ENCODE measurements at regions of chr17 and their contacts with region 1.

Region 1: GRCh38 chr17:58200017-58200633 is 7.6 kb downstream of the EPX start:
- DNase-seq: peak; percentile 22 to 73 (median 42)
- ATAC-seq: peak; percentile 76
- H3K4me3 ChIP-seq: no peak overlapping the region
- H3K4me3 Mint-ChIP-seq: no peak overlapping the region
- H3K27ac ChIP-seq: no peak overlapping the region
- H3K27ac Mint-ChIP-seq: no peak overlapping the region
- H3K4me1 ChIP-seq: peaks cover 5% of the 10 kb centered on the region
- H3K4me1 Mint-ChIP-seq: peaks cover 4% of the 10 kb centered on the region
- H3K27me3 ChIP-seq: peaks cover 0 to 10% of the 10 kb centered on the region in 2 experiments
- H3K27me3 Mint-ChIP-seq: peaks cover 23% of the 10 kb centered on the region
- CTCF ChIP-seq: peak; percentile 67

Region 2: DNA sequence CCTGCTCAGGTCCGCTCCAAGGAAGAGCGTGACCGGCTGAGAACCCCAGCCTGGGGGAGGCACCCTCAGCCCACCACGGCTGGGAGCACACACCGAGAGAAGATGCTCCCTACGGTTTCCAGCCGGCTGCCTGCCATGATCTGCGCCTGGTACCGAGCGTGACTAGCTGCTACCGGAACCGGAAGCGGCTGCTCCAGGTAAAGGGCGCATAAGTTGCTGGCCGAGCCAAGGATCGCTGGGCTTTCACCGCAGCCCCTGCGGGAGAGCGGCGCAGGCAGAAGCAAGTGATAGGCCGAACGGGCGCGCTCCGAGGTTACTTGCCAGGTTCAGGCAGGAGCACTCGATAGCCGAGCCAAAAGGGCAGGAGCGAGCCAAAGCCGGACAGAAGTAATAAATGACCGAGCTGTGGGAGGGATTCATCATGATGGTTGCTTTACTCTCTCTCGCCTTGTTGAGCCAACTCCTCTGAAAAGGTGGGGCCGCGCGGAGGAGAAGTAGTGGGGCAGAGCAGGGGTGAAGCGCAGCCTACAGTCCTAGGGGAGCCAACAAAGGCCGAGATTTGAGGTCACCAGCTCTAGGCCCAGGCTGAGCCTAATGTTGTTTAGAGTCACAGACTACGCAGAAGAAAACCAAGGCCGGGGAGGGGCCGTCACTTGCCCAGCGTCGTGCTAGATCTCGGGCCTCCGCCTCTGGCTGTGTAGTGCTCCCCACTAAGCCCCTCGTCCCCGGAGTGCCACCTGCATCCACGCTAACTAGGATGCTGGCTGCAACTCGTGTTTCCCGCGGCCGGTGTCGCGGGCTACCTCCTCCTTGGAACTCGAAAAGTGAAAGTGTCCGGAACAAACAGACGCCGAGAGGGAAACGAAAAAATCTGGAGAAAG is 350.0 kb before region 1 on chr17 and contains the start of gene MRPS23:
- CTCF ChIA-PET with region 1: no interaction called
- POLR2A ChIA-PET with region 1: no interaction called
- intact Hi-C with region 1: no loop called
- DNase-seq: peak; percentile 92 to 99 (median 95)
- ATAC-seq: peak; percentile 91
- H3K4me3 ChIP-seq: peak within 1 kb of the TSS; percentile 99
- H3K4me3 Mint-ChIP-seq: peak within 1 kb of the TSS; percentile 95
- H3K27ac ChIP-seq: peak within 1 kb of the TSS; percentile 88 to 93
- H3K27ac Mint-ChIP-seq: peak within 1 kb of the TSS; percentile 97
- H3K4me1 ChIP-seq: peaks cover 42% of the 10 kb centered on the region
- H3K4me1 Mint-ChIP-seq: peaks cover 45% of the 10 kb centered on the region
- H3K27me3 ChIP-seq: no peaks in the 10 kb centered on the region
- H3K27me3 Mint-ChIP-seq: no peaks in the 10 kb centered on the region
- CTCF ChIP-seq: no peak
- total RNA-seq, gene MRPS23: 14.6 to 14.7 TPM

Region 3: DNA sequence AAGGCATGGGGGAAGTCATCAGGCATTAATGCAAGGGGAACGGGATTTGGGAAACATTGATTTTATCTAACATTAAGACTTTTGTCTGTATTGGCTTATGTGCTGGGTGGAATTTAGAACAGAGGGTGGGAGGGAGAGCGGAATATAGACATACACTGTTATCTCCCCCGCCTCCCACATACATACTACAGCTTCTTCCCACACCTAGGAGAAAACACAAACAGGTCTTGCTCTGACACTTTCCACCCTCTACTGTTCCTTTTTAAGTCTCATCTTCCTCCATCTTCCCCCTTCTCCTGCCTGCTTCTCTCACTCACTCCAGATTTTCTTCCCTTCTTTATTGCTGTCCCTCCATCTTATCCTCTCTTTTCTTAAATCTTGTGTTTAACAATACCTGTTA is 51.5 kb before region 1 on chr17:
- CTCF ChIA-PET with region 1: no interaction called
- POLR2A ChIA-PET with region 1: no interaction called
- intact Hi-C with region 1: no loop called
- DNase-seq: no peak
- ATAC-seq: no peak
- H3K4me3 ChIP-seq: no peak overlapping the region
- H3K4me3 Mint-ChIP-seq: no peak overlapping the region
- H3K27ac ChIP-seq: no peak overlapping the region
- H3K27ac Mint-ChIP-seq: no peak overlapping the region
- H3K4me1 ChIP-seq: peaks cover 28% of the 10 kb centered on the region
- H3K4me1 Mint-ChIP-seq: peaks cover 56% of the 10 kb centered on the region
- H3K27me3 ChIP-seq: no peaks in the 10 kb centered on the region
- H3K27me3 Mint-ChIP-seq: no peaks in the 10 kb centered on the region
- CTCF ChIP-seq: no peak

Region 4: GRCh38 chr17:58447039-58447975 is 247.2 kb after region 1 on chr17:
- CTCF ChIA-PET with region 1: interaction called, 3 read pairs
- POLR2A ChIA-PET with region 1: no interaction called
- intact Hi-C with region 1: loop called in 1 of 2 experiments (anchors 5 kb)
- DNase-seq: peak; percentile 36 to 81 (median 50)
- ATAC-seq: peak; percentile 69
- H3K4me3 ChIP-seq: no peak overlapping the region
- H3K4me3 Mint-ChIP-seq: no peak overlapping the region
- H3K27ac ChIP-seq: no peak overlapping the region
- H3K27ac Mint-ChIP-seq: no peak overlapping the region
- H3K4me1 ChIP-seq: no peaks in the 10 kb centered on the region
- H3K4me1 Mint-ChIP-seq: no peaks in the 10 kb centered on the region
- H3K27me3 ChIP-seq: no peaks in the 10 kb centered on the region
- H3K27me3 Mint-ChIP-seq: no peaks in the 10 kb centered on the region
- CTCF ChIP-seq: peak; percentile 57

Measured in CD4-positive, alpha-beta T cell (primary cell).